Heart left ventricle (tissue), 16 donors: ENCODE measurements at regions of chr4 and their contacts with region 1.

Region 1: DNA sequence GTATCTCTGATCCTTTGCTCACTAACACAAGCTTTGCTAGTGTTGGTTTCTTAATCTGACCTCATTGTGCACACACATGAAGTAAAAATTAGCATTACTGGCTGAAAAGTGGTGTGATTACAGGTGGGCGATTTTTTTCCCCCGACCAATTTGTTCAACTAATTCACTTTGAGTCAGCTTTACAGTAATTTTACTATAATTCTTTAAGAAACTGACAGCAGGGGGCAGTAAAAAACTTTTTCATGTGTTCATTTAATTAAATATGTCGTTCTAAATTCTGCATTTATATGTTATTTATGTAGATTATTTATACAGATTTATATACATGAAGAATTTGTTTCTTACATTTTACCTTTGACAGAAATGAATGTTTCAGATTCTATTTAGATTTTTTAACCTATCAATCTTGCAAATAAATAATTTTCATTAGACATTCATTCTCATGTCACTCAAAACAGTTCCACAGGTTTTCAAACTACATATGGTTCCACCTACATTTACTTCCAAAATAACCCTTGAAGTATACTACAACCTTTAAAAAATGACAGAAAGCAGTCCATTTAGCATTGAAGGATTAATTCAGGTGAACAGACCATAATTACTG is 17.5 kb downstream of the PALLD start:
- DNase-seq: no peak
- ATAC-seq: no peak
- H3K4me3 ChIP-seq: peak overlapping the region in 1 of 12 donors; percentile 25
- H3K27ac ChIP-seq: peak overlapping the region in 2 of 12 donors; percentile 60 to 65
- H3K4me1 ChIP-seq: peaks cover 0 to 47% (median 15%) of the 10 kb centered on the region in 12 donors
- H3K27me3 ChIP-seq: no peaks in the 10 kb centered on the region
- CTCF ChIP-seq: peak; percentile 25 to 66 (median 54)
- POLR2A ChIP-seq: no peak

Region 2: DNA sequence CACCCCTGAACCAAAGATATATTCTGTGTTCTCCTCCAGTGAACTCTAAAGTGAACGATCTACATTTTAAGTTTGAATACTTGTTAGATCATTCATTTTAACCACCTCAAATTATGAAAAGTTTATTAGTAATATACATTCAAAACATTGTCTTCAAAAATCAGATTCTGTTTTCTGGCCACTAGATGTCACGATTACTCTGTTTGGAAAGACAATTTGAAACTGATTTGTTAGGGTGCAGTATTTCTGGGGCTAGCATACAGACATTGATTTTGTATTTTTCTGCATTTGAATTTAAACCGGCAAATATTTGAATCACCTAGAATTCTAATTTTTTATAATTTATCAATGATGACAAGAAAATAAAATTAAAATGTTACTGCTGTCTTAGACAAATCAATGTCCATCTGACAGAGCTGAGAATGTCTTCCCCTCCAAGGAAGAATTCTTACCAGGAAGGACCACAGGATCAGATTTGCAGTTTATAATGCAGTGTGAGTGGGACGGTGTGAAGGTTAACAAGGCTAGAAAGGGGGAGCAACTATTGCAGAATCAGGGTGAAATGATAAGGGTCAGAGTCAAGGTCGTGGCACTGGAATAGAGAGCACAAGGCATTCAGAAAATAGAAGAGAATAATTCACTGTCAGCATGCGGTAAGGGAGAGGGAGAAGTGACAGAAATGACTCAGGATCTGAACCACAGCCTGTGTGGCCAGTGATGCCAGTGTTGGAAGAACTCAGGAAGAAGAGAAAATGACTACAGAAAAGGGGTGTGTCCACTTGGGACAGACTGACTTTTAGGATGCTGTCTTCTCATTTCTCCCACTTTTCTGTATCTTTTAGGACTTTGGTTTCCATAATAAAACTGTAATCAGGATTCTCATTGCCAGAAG is 330.4 kb before region 1 on chr4:
- intact Hi-C with region 1: loop called in 1 of 10 experiments (anchors 10 kb)
- DNase-seq: no peak
- ATAC-seq: peak; percentile 32 to 52 (median 42)
- H3K4me3 ChIP-seq: no peak overlapping the region
- H3K27ac ChIP-seq: peak overlapping the region in 4 of 12 donors; percentile 21 to 58 (median 33)
- H3K4me1 ChIP-seq: peaks cover 0 to 5% (median 0%) of the 10 kb centered on the region in 12 donors
- H3K27me3 ChIP-seq: no peaks in the 10 kb centered on the region
- CTCF ChIP-seq: peak; percentile 36 to 67 (median 48)
- POLR2A ChIP-seq: no peak

Region 3: DNA sequence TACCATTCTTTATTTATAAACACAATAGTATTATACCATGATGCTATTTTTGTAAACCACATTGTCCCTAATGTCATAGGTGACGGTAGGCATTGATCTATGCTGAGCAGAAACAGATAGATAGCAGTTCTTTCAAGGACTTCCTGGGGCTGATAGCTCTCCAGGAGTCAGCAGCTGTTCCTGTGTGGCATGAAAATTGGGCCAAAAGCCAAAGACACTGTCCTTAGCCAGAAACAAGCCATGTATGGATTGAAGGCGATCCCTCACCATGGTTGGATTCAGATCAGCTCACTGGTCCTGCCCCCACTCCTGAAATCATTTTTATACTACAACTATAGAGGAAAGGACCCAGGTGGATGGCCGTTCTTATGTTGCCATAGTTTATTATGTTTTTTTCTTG is 249.4 kb before region 1 on chr4:
- intact Hi-C with region 1: loop called in 1 of 10 experiments (anchors 10 kb)
- DNase-seq: peak in 4 of 5 donors; percentile 54 to 79 (median 70)
- ATAC-seq: peak; percentile 87 to 95 (median 92)
- H3K4me3 ChIP-seq: no peak overlapping the region
- H3K27ac ChIP-seq: peak overlapping the region; percentile 38 to 87 (median 62)
- H3K4me1 ChIP-seq: peaks cover 0 to 23% (median 3%) of the 10 kb centered on the region in 12 donors
- H3K27me3 ChIP-seq: no peaks in the 10 kb centered on the region
- CTCF ChIP-seq: no peak
- POLR2A ChIP-seq: no peak

Region 4: GRCh38 chr4:168569066-168569970 is 55.0 kb after region 1 on chr4:
- intact Hi-C with region 1: no loop called
- DNase-seq: peak in 4 of 5 donors; percentile 41 to 70 (median 64)
- ATAC-seq: peak; percentile 95 to 97 (median 97)
- H3K4me3 ChIP-seq: peak overlapping the region in 8 of 12 donors; percentile 0 to 37 (median 14)
- H3K27ac ChIP-seq: peak overlapping the region in 9 of 12 donors; percentile 6 to 71 (median 53)
- H3K4me1 ChIP-seq: peaks cover 0 to 53% (median 15%) of the 10 kb centered on the region in 12 donors
- H3K27me3 ChIP-seq: no peaks in the 10 kb centered on the region
- CTCF ChIP-seq: no peak
- POLR2A ChIP-seq: no peak

Region 5: DNA sequence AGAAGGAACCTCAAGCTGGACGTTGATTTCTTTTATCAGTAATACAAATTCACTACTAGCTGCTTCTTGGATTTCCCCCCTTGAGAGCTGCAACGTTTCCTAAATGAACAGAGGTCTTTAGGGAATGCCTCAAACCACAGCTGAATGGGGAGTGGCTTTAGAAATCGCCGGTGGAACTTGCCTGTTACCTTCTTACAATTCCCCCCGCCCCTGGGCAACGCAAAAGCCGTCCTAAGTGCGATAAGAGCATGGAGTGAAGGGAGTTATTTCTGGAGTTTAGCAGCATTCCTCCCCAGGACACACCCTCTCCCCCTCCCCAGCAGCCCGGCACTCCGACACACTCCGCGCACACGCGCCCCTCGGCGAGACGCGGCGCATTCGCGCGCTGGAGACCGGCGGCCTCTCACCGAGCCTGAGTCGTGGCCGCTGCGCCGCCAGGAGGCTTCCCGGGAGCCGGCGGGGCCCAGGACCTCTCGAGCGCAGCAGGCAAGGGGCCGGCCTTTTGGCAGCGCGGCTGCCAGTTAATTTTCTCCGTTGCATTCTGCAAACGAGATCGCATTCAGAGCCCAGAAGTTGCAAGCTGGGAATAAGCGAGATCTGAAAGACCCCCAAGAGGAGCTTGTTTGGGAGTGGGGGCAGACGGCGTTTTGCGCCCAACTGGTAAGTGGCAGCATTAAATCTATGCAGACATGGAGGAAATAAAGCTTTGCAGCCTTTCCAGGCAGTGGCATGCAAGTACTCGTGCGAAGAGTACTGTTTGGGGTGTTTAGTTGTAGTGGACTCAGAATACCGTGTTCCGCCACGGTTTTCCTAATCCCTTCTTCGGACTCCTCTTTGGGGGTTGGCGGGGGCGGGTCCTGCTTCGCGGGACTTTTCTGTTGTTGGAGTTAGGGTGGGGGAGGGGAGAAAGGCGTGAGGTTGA is 117.2 kb after region 1 on chr4:
- intact Hi-C with region 1: loop called in 1 of 10 experiments (anchors 10 kb)
- DNase-seq: peak; percentile 57 to 80 (median 71)
- ATAC-seq: peak; percentile 59 to 86 (median 84)
- H3K4me3 ChIP-seq: peak overlapping the region; percentile 28 to 75 (median 58)
- H3K27ac ChIP-seq: peak overlapping the region; percentile 22 to 87 (median 76)
- H3K4me1 ChIP-seq: peaks cover 0 to 54% (median 34%) of the 10 kb centered on the region in 12 donors
- H3K27me3 ChIP-seq: peaks cover 0 to 30% (median 0%) of the 10 kb centered on the region in 9 donors
- CTCF ChIP-seq: peak in 10 of 12 donors; percentile 27 to 68 (median 39)
- POLR2A ChIP-seq: no peak

Region 6: GRCh38 chr4:168694648-168695047 is 180.3 kb after region 1 on chr4:
- intact Hi-C with region 1: loop called in 2 of 10 experiments (anchors 10 kb)
- DNase-seq: no peak
- ATAC-seq: peak; percentile 45 to 90 (median 58)
- H3K4me3 ChIP-seq: no peak overlapping the region
- H3K27ac ChIP-seq: peak overlapping the region in 8 of 12 donors; percentile 23 to 66 (median 38)
- H3K4me1 ChIP-seq: peaks cover 0 to 23% (median 2%) of the 10 kb centered on the region in 12 donors
- H3K27me3 ChIP-seq: no peaks in the 10 kb centered on the region
- CTCF ChIP-seq: no peak
- POLR2A ChIP-seq: no peak

Region 7: DNA sequence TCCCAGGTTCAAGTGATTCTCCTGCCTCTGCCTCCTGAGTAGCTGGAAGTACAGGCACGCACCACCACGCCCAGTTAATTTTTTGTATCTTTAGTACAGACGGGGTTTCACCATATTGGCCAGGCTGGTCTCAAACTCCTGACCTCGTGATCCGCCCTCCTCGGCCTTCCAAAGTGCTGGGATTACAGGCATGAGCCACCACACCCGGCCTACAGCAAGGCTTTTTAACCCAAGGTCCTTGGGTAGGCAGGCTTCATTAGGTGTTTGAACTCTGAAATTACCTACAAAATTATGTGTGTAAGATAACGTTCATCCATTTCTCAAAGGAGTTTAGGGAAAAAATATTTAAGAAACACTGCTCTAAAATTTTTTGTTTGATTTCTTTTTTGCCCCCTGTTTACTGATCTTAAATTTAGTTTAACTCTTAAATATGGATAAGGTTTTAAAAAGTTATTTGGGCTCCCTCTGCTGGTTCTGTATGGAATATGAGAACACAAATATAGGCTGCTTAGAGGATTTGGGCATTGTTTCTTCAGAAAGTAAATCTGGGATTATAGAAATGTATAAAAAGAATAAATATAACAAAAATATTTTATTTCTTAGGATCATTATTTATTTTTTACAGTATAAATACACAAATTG is 402.9 kb after region 1 on chr4:
- intact Hi-C with region 1: loop called in 9 of 10 experiments (anchors 2 to 10 kb)
- DNase-seq: no peak
- ATAC-seq: no peak
- H3K4me3 ChIP-seq: no peak overlapping the region
- H3K27ac ChIP-seq: peak overlapping the region in 2 of 12 donors; percentile 8 to 49
- H3K4me1 ChIP-seq: peaks cover 0 to 20% (median 2%) of the 10 kb centered on the region in 12 donors
- H3K27me3 ChIP-seq: no peaks in the 10 kb centered on the region
- CTCF ChIP-seq: peak; percentile 36 to 73 (median 60)
- POLR2A ChIP-seq: no peak